ENCODE measurements at regions of chr14 and their contacts with region 1.

Region 1: DNA sequence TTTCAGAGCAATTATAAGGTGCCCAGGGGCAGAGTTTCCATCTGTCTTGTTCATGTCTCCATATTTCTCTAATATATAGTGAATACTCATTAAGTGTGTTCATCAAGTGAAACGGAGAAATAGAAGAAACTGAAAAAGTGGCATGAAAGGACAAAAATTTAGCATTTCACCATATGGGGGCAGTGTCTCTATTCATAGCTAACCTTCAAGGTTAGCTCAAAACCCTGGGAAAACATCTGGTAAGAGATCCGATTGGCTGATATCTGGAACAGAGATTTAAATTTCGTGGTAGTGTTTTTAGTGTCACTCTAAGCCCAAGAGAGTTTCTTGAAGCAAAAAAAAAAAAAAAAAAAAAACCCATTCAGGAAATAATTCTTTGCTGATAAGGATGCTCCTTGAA is 367.5 kb downstream of the DAD1 start:
- DNase-seq: peak; percentile 49
- ATAC-seq: no peak
- H3K4me3 ChIP-seq: no peak overlapping the region
- H3K27ac ChIP-seq: no peak overlapping the region
- H3K4me1 ChIP-seq: peaks cover 9% of the 10 kb centered on the region
- H3K27me3 ChIP-seq: no peaks in the 10 kb centered on the region
- CTCF ChIP-seq: peak; percentile 58
- POLR2A ChIP-seq: no peak
- RAD21 ChIP-seq: peak; percentile 37

Region 2: DNA sequence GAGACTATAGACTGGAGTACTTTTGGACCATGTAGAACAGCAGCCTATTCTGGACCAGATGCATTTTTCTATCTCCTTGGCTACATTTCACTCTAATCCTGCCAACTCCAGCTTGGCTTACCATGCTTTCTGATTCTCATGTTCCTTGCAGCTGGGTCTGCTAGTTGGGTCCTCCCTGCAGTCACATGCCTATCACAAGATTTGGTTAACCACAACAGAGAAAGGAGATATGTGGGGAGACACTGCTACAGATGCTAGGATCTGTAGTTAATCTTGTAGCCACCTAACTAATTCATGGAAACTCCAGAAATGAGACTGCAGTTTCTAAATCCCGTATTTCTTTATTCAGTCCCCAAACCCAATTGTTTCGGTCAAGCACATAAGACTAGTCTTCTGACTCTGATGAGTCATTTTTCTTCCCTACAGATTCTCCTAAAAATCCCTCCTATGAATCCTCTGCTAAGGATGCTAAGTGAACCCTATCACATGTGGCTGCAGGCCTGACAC is 43.1 kb before region 1 on chr14:
- CTCF ChIA-PET with region 1: no interaction called
- POLR2A ChIA-PET with region 1: no interaction called
- dilution Hi-C with region 1: no loop called
- in situ Hi-C with region 1: no loop called
- intact Hi-C with region 1: no loop called
- DNase-seq: peak; percentile 20
- ATAC-seq: no peak
- H3K4me3 ChIP-seq: no peak overlapping the region
- H3K27ac ChIP-seq: no peak overlapping the region
- H3K4me1 ChIP-seq: 0 out of 2 replicates have a peak, but pooled peaks cover 2% of the 10 kb centered on the region
- H3K27me3 ChIP-seq: no peaks in the 10 kb centered on the region
- CTCF ChIP-seq: no peak
- POLR2A ChIP-seq: no peak
- RAD21 ChIP-seq: no peak

Region 3: DNA sequence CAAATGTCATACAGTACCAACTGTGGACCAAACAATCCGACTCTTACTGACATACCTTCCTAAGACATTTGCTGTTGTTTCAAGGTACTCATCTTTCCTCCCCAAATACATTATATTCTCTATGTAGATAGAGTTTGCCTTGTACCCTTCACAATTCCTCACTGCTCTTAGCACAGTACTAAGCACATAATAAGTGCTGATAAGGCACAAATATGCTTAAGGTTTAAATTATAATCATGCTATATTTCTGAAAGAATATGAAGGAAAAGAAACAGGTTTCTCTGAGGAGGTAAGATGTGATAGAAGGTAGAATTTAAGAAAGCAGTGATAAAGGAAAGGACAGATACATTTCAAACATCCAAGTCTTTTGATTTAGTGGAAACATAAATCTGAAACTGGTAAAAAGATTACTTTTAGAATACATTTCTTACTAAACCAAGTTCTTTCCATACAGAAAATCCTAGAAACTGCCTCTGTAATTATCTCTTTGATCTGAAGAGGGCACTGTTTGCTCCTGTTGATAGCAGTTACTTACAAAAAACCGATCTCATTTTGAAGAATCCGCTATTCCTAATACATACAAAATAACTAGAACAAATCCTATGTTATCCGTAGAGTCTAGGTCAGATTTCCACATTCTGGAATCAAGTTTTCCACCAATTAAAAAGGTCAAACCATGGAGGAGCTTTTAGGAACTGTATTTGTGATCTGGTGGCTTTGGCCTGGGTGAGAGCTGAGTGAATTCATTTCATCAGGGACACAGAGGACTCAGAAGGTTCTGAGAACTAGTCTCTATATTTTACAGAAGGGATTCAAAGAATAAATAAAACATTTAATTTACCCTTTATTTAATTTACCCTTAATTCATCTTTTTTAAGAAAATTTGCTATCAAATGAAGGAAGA is 55.7 kb after region 1 on chr14:
- CTCF ChIA-PET with region 1: interaction called, 3 read pairs
- POLR2A ChIA-PET with region 1: no interaction called
- dilution Hi-C with region 1: no loop called
- in situ Hi-C with region 1: no loop called
- intact Hi-C with region 1: loop called (anchors 5 kb)
- DNase-seq: peak; percentile 35
- ATAC-seq: peak; percentile 73
- H3K4me3 ChIP-seq: no peak overlapping the region
- H3K27ac ChIP-seq: no peak overlapping the region
- H3K4me1 ChIP-seq: 0 out of 2 replicates have a peak, but pooled peaks cover 3% of the 10 kb centered on the region
- H3K27me3 ChIP-seq: no peaks in the 10 kb centered on the region; the same call in 1 of the 2 replicates
- CTCF ChIP-seq: peak; percentile 66
- POLR2A ChIP-seq: no peak
- RAD21 ChIP-seq: peak; percentile 56

Region 4: GRCh38 chr14:22296722-22297121 is 75.2 kb after region 1 on chr14:
- CTCF ChIA-PET with region 1: interaction called, 3 read pairs
- POLR2A ChIA-PET with region 1: no interaction called
- dilution Hi-C with region 1: no loop called
- in situ Hi-C with region 1: no loop called
- intact Hi-C with region 1: loop called (anchors 5 kb)
- DNase-seq: peak; percentile 90
- ATAC-seq: peak; percentile 61
- H3K4me3 ChIP-seq: no peak overlapping the region
- H3K27ac ChIP-seq: no peak overlapping the region
- H3K4me1 ChIP-seq: peaks cover 14% of the 10 kb centered on the region
- H3K27me3 ChIP-seq: no peaks in the 10 kb centered on the region
- CTCF ChIP-seq: no peak
- POLR2A ChIP-seq: no peak
- RAD21 ChIP-seq: no peak

Region 5: DNA sequence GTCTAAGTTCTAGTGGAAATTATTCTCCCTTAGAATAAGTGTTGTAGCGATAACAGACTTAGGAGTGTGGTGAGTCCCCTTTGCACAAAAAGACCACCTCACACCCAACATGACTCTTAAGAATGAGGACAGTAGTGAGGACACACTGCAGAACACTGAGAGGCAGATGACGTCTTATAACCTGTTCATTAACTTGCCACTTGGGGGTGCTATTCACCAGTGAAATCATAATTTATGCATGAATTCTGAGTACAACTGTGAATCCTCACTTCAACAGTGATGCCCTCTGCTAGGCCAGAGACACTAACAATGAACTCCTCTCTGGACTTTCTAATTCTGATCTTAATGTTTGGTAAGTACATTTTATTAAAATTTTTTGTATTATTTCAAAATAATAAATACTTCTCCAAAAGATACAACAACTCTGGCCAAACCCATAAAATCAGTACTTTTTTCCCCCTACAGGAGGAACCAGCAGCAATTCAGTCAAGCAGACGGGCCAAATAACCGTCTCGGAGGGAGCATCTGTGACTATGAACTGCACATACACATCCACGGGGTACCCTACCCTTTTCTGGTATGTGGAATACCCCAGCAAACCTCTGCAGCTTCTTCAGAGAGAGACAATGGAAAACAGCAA is 92.8 kb after region 1 on chr14:
- CTCF ChIA-PET with region 1: interaction called, 9 read pairs
- POLR2A ChIA-PET with region 1: no interaction called
- dilution Hi-C with region 1: no loop called
- in situ Hi-C with region 1: no loop called
- intact Hi-C with region 1: loop called (anchors 5 kb)
- DNase-seq: peak; percentile 62
- ATAC-seq: peak; percentile 93
- H3K4me3 ChIP-seq: no peak overlapping the region
- H3K27ac ChIP-seq: no peak overlapping the region
- H3K4me1 ChIP-seq: no peaks in the 10 kb centered on the region
- H3K27me3 ChIP-seq: peaks cover 2% of the 10 kb centered on the region; the same call in 1 of the 2 replicates
- CTCF ChIP-seq: peak; percentile 65
- POLR2A ChIP-seq: no peak
- RAD21 ChIP-seq: peak; percentile 50

Region 6: GRCh38 chr14:22375321-22375930 is 153.9 kb after region 1 on chr14:
- CTCF ChIA-PET with region 1: interaction called, 10 read pairs
- POLR2A ChIA-PET with region 1: no interaction called
- dilution Hi-C with region 1: no loop called
- in situ Hi-C with region 1: no loop called
- intact Hi-C with region 1: loop called (anchors 1 kb)
- DNase-seq: peak; percentile 68
- ATAC-seq: no peak; the same call in 1 of the 2 replicates
- H3K4me3 ChIP-seq: no peak overlapping the region
- H3K27ac ChIP-seq: no peak overlapping the region
- H3K4me1 ChIP-seq: no peaks in the 10 kb centered on the region
- H3K27me3 ChIP-seq: peaks cover 24% of the 10 kb centered on the region
- CTCF ChIP-seq: peak; percentile 79
- POLR2A ChIP-seq: no peak
- RAD21 ChIP-seq: peak; percentile 70

Measured in IMR-90 (cell line).